ENCODE measurements at regions of chr3 and their contacts with region 1.

Region 1: DNA sequence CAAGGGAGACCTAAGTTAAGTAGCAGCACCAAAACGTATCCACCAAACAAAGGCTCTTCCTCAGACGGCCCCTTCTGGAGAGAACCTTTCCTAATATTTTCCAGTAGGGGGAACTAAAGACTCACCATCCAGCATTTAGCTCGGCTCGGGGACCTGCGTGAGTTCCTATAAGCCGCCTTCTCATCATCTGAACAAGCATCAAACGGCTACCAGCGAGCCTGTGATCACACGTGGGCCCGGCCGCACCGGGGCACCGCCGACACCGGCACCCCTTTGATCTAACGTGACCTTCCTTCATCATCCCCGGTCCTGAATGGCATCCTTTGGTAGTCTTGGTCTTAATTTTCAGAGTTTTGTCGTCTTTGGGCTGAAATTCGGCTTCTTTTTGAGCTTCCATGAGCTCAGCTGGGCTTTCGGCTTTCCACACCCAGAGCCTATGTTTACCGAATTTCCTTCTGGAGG is 1.4 kb upstream of the ROBO2 start:
- DNase-seq: peak; percentile 78
- H3K4me3 ChIP-seq: peak overlapping the region; percentile 48 to 53
- H3K27ac ChIP-seq: peak overlapping the region in 1 of 2 experiments; percentile 71; a peak in 2 of 4 replicates
- H3K4me1 ChIP-seq: peaks cover 0 to 2% of the 10 kb centered on the region in 2 experiments; a peak in 2 of 4 replicates
- H3K27me3 ChIP-seq: peaks cover 27% of the 10 kb centered on the region
- CTCF ChIP-seq: peak; percentile 72
- EP300 ChIP-seq: no peak
- RAD21 ChIP-seq: peak; percentile 94

Region 2: DNA sequence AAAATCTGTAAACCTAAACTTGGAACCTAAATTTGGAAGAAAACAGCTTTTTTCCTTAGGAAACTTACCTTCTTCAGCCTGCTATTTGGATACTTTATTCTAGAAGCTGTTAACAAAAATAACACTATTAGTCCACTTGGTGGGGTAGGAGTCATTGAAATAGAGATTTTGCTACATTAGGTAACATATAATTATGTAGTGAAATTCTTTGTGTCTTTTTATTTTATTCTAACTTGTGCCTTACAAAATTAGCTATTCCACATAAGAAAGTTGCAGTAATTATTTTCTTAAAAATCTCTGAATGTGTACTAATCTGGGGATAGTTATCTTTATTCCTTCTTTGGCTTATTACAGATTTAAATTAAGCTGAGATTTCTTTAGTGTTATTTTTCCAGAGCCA is 359.0 kb before region 1 on chr3:
- CTCF ChIA-PET with region 1: interaction called, 13 read pairs
- POLR2A ChIA-PET with region 1: interaction called, 3 read pairs
- DNase-seq: no peak
- H3K4me3 ChIP-seq: no peak overlapping the region
- H3K27ac ChIP-seq: no peak overlapping the region
- H3K4me1 ChIP-seq: no peaks in the 10 kb centered on the region; a peak in 1 of 4 replicates
- H3K27me3 ChIP-seq: no peaks in the 10 kb centered on the region
- CTCF ChIP-seq: no peak
- EP300 ChIP-seq: no peak
- RAD21 ChIP-seq: peak; percentile 60

Region 3: DNA sequence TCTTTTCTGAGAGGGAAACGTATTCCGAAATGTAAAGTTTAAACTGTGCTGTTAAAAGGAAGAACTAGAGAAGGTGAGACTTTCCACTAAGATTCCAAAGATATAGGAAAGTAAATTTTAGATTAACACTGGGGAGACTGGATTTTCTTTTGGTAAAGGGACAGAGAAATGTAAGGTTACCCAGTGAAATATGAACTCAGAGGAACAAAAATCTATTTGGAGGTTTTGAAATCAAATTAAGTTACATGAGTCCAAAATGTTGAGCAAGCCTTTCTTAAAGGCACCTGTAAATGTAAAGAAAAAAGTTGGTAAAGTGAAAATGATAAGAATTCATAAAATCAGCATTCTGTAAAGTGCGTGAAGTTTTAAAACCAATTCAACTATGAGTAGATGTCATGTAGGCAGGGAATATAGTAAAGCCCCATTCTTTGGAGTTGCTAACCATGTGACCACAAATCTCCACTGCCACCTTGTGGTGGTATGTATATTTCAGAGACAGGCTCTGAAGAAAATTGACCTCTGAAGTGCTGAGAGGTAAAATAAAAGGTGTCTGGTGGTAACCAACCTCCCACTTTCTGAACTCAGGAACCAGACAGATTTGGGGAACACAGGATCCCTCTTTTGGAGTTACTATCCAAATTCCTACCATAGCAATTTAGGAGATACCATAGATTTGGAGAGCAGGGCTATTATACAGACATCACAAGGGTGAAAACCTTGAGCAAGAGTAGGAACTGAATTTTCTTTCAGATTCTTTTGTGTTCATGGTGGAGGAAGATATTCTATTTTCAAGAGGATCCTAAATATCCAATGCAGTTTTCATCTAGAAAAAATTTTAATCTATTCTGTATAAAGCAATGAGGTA is 216.7 kb after region 1 on chr3:
- CTCF ChIA-PET with region 1: interaction called, 95 read pairs
- POLR2A ChIA-PET with region 1: interaction called, 3 read pairs
- DNase-seq: peak; percentile 65
- H3K4me3 ChIP-seq: no peak overlapping the region; a peak in 1 of 4 replicates
- H3K27ac ChIP-seq: no peak overlapping the region
- H3K4me1 ChIP-seq: no peaks in the 10 kb centered on the region; a peak in 1 of 4 replicates
- H3K27me3 ChIP-seq: no peaks in the 10 kb centered on the region
- CTCF ChIP-seq: peak; percentile 77
- EP300 ChIP-seq: no peak
- RAD21 ChIP-seq: peak; percentile 93

Region 4: GRCh38 chr3:77262361-77262760 is 223.9 kb after region 1 on chr3:
- CTCF ChIA-PET with region 1: interaction called, 95 read pairs
- POLR2A ChIA-PET with region 1: interaction called, 3 read pairs
- DNase-seq: no peak
- H3K4me3 ChIP-seq: no peak overlapping the region
- H3K27ac ChIP-seq: no peak overlapping the region
- H3K4me1 ChIP-seq: no peaks in the 10 kb centered on the region
- H3K27me3 ChIP-seq: no peaks in the 10 kb centered on the region
- CTCF ChIP-seq: no peak
- EP300 ChIP-seq: no peak
- RAD21 ChIP-seq: no peak

Region 5: DNA sequence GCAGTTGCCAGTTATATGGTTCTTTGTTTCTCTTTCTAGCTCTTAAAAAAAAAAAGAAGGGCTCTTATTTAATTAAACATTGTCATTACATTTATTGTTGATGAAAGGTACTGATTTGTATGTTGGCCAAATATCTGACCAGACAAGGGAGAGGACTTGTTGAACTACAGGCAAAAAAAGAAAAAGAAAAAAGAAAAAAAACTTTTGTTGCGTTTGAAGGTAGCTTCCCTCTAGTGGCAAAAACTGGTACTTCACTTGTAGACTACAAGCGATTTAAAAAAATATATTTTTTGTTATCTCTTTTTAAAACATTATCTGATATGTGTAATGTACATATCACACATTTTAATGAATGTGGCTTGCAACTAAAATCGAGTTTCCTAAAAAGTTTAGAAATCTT is 282.0 kb after region 1 on chr3:
- CTCF ChIA-PET with region 1: interaction called, 31 read pairs
- POLR2A ChIA-PET with region 1: no interaction called
- DNase-seq: peak; percentile 21
- H3K4me3 ChIP-seq: no peak overlapping the region
- H3K27ac ChIP-seq: no peak overlapping the region
- H3K4me1 ChIP-seq: no peaks in the 10 kb centered on the region; a peak in 1 of 4 replicates
- H3K27me3 ChIP-seq: no peaks in the 10 kb centered on the region
- CTCF ChIP-seq: peak; percentile 80
- EP300 ChIP-seq: no peak
- RAD21 ChIP-seq: peak; percentile 52

Measured in SK-N-SH (cell line).